ENCODE measurements at regions of chr17 and their contacts with region 1.

Region 1: GRCh38 chr17:71472809-71473789 is 647.7 kb upstream of the SOX9 start:
- DNase-seq: peak; percentile 87
- ATAC-seq: peak; percentile 97
- H3K4me3 ChIP-seq: no peak overlapping the region
- H3K27ac ChIP-seq: no peak overlapping the region
- H3K4me1 ChIP-seq: peaks cover 13% of the 10 kb centered on the region
- H3K27me3 ChIP-seq: no peaks in the 10 kb centered on the region
- CTCF ChIP-seq: peak; percentile 95

Region 2: DNA sequence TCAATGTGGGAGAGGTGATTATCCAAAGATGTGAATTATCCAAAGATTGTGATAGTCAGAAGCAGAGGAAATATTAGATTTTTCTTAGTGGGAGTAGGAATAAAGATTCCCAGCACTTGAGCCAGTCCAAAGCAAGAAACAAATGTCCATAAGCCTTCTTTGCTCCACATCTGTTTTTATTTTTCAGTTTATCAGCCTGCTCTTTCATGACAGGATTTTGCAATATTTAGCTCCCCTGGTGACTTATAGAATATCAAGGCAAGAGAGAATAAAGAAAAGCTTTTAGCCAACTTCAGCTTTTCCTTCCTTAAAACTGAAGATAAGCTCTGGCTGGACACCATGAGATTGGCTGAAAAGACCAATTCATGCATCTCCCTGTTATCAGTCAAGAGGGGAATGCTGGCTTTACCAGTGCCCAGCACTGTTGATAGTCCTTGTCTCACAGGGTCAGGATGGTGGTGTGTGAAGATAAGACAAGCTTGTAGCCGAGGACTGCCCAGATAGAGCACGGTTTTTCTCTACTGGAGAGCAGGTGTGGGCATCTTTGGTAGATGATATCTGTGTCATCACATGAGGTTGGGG is 597.3 kb before region 1 on chr17:
- CTCF ChIA-PET with region 1: no interaction called
- POLR2A ChIA-PET with region 1: no interaction called
- intact Hi-C with region 1: no loop called
- DNase-seq: no peak
- ATAC-seq: no peak
- H3K4me3 ChIP-seq: no peak overlapping the region
- H3K27ac ChIP-seq: no peak overlapping the region
- H3K4me1 ChIP-seq: no peaks in the 10 kb centered on the region
- H3K27me3 ChIP-seq: peaks cover 11% of the 10 kb centered on the region
- CTCF ChIP-seq: no peak

Region 3: DNA sequence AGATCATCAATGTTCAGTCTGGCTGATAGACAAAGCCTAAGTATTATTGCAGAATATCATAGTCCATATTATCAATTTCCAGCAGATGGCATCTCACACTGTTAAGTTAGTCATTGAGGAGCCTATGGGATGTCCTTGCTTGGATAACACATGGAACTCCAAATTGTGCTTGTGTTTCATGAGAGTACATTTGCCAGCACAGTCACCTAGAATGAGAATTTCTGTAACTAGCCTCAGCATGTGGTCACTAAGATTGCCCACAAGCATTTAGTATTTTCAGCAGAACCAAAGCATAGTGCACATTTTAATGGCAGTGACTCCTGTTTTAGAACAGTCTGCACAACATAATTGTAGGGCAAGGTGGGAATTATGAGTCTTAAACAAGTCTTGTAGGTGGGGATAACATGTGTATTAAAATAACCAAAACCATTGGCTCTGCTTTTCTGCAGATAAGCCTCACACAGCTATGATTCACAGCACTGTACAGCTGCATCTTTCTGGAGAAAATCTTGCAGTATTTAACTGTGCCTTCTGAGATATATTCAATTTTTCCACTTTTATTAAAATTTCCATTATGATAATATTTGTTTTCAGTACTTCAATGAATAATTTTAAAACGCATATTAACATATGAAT is 235.1 kb before region 1 on chr17:
- CTCF ChIA-PET with region 1: no interaction called
- POLR2A ChIA-PET with region 1: no interaction called
- intact Hi-C with region 1: loop called (anchors 1 kb)
- DNase-seq: peak; percentile 87
- ATAC-seq: peak; percentile 97
- H3K4me3 ChIP-seq: no peak overlapping the region
- H3K27ac ChIP-seq: peak overlapping the region; percentile 32
- H3K4me1 ChIP-seq: peaks cover 4% of the 10 kb centered on the region; the same call in 1 of the 2 replicates
- H3K27me3 ChIP-seq: no peaks in the 10 kb centered on the region
- CTCF ChIP-seq: peak; percentile 85

Region 4: GRCh38 chr17:71438631-71439146 is 34.4 kb before region 1 on chr17:
- CTCF ChIA-PET with region 1: interaction called, 10 read pairs
- POLR2A ChIA-PET with region 1: no interaction called
- intact Hi-C with region 1: no loop called
- DNase-seq: peak; percentile 97
- ATAC-seq: peak; percentile 76
- H3K4me3 ChIP-seq: no peak overlapping the region
- H3K27ac ChIP-seq: peak overlapping the region; percentile 89
- H3K4me1 ChIP-seq: peaks cover 64% of the 10 kb centered on the region
- H3K27me3 ChIP-seq: no peaks in the 10 kb centered on the region
- CTCF ChIP-seq: peak; percentile 40

Region 5: DNA sequence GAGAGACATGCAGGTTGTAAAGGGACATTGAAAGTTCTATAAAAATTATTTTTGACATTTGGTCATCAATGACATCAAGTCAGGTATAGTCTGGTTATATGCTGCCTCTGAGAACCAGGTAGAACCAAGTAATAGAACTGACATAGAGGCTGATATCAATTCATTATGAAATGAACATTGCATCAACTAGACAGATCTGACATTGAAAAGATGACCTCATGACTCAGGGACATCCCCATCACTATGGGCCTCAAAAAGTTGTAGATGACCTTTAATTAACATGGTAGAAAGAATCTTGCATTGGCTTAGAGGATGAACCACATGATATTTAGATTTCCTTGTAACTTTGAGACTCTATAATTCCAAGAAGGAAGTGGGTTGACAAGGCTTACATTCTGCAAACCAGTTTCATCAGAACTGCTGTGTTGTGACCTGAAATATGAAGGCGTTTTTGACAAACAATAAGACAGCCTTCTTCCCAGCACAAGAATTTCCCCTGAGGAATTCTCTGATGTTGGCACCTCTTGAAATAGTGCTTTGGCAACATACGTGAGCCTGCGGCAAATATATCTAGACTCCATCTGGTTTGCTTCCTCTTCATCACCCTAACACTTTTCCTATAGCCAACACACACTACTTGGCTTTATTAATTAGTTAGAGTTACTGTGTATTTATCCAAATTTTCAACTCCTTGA is 62.1 kb after region 1 on chr17:
- CTCF ChIA-PET with region 1: no interaction called
- POLR2A ChIA-PET with region 1: no interaction called
- intact Hi-C with region 1: no loop called
- DNase-seq: no peak
- ATAC-seq: no peak
- H3K4me3 ChIP-seq: no peak overlapping the region
- H3K27ac ChIP-seq: no peak overlapping the region
- H3K4me1 ChIP-seq: peaks cover 7% of the 10 kb centered on the region; the same call in 1 of the 2 replicates
- H3K27me3 ChIP-seq: no peaks in the 10 kb centered on the region
- CTCF ChIP-seq: no peak

Region 6: DNA sequence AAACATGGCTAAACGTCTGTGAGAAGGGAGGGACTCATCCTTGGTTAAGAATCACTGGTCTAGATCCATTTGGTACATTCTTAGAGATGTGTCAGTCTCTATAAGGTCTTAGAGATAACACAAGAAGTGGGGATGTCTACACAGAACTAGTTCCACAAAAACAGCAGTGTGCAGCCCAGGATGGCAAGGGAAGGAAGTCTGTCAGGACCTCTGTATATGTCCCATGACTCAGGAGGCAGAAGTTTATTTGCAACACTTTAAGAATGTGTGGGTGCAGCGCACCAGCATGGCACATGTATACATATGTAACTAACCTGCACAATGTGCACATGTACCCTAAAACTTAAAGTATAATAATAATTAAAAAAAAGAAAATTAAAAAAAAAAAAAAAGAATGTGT is 99.2 kb after region 1 on chr17:
- CTCF ChIA-PET with region 1: interaction called, 4 read pairs
- POLR2A ChIA-PET with region 1: no interaction called
- intact Hi-C with region 1: loop called (anchors 1 kb)
- DNase-seq: peak; percentile 25
- ATAC-seq: peak; percentile 33
- H3K4me3 ChIP-seq: no peak overlapping the region
- H3K27ac ChIP-seq: no peak overlapping the region
- H3K4me1 ChIP-seq: 0 out of 2 replicates have a peak, but pooled peaks cover 3% of the 10 kb centered on the region
- H3K27me3 ChIP-seq: no peaks in the 10 kb centered on the region
- CTCF ChIP-seq: no peak

Region 7: GRCh38 chr17:71764505-71764904 is 291.4 kb after region 1 on chr17:
- CTCF ChIA-PET with region 1: no interaction called
- POLR2A ChIA-PET with region 1: no interaction called
- intact Hi-C with region 1: loop called (anchors 1 kb)
- DNase-seq: peak; percentile 53
- ATAC-seq: peak; percentile 62
- H3K4me3 ChIP-seq: no peak overlapping the region
- H3K27ac ChIP-seq: no peak overlapping the region
- H3K4me1 ChIP-seq: peaks cover 13% of the 10 kb centered on the region
- H3K27me3 ChIP-seq: no peaks in the 10 kb centered on the region
- CTCF ChIP-seq: peak; percentile 71

Region 8: DNA sequence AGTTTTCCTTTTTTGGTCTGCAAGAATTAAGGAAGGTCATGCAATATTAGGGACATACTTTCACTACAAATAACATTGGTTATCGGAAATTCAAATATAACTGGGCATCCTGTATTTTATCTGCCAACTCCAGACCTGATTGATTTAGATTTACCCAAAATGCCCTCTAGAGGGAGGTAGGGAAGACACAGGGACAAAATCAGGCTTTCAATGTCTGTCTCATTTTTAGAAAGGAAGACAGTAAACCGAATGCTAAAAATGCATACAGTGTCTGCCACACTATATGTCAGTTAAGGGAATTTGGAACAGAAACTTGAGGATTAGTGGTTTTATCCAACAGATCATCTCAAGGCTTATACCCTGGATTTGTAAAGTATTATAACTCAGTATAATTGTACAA is 486.1 kb after region 1 on chr17:
- CTCF ChIA-PET with region 1: no interaction called
- POLR2A ChIA-PET with region 1: no interaction called
- intact Hi-C with region 1: loop called (anchors 2 kb)
- DNase-seq: peak; percentile 74
- ATAC-seq: peak; percentile 69
- H3K4me3 ChIP-seq: no peak overlapping the region
- H3K27ac ChIP-seq: no peak overlapping the region
- H3K4me1 ChIP-seq: no peaks in the 10 kb centered on the region
- H3K27me3 ChIP-seq: no peaks in the 10 kb centered on the region
- CTCF ChIP-seq: peak; percentile 91

Region 9: DNA sequence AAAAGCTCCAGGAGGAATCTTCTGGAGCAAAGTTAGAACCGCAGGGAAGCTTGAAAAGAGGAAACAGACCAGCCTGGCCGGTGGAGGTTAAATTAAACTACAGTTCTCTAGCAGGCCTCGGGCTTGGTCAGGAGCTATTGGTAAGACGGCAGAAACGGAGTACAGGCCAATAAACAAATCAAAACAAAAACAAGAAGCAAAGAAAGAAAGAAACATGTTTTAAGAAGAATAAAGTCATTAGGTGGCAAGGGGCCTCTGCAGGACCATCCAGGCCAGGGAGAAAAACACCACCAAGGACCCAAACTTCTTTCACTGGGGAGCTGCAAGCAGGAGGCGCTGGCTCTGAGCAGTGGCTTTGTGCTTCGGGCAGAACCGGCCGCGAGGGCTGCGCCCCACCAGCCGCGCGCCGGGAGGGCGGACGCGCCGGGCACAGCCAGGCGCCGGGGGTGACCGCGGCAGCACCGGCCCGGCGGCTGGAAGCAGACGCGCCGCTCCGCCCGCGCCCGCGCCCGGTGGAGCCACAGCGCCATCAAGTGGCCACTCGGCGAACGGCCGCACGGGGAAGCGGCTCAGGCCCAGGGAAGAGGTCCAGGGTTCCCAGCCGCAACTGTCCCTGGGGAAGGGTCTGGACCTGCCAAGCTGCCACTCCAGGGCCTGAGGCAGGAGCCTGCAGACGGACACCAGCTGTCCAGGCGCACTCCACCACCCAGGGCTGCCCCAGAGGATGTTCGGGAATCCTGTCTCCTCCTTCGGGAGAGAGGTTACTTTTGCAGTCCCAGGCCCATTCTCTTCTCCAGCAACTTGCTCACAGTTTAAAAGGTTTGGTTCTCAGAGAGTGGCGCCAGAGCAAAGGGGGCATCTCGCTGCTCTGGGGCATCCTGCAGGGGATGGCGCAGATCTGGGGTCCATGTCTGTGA is 1067.1 kb after region 1 on chr17:
- CTCF ChIA-PET with region 1: interaction called, 3 read pairs
- POLR2A ChIA-PET with region 1: no interaction called
- intact Hi-C with region 1: loop called (anchors 5 kb)
- DNase-seq: peak; percentile 90
- ATAC-seq: peak; percentile 98
- H3K4me3 ChIP-seq: peak overlapping the region; percentile 52
- H3K27ac ChIP-seq: peak overlapping the region; percentile 70
- H3K4me1 ChIP-seq: peaks cover 16% of the 10 kb centered on the region
- H3K27me3 ChIP-seq: no peaks in the 10 kb centered on the region
- CTCF ChIP-seq: peak; percentile 79